Activated T-helper 1 cell treated with anti-CD3 and anti-CD28 coated beads, Interleukin-12 subunit alpha, Interleukin-12 subunit beta, Interleukin-2, Interleukin-4 antibody, amounts not matched to agents 30 ng/mL and 10 ng/mL and 1 ng/mL, durations not matched to agents 14 hours and 24 hours and 36 hours (primary cell): ENCODE measurements at regions of chr12 and their contacts with region 1.

Region 1: DNA sequence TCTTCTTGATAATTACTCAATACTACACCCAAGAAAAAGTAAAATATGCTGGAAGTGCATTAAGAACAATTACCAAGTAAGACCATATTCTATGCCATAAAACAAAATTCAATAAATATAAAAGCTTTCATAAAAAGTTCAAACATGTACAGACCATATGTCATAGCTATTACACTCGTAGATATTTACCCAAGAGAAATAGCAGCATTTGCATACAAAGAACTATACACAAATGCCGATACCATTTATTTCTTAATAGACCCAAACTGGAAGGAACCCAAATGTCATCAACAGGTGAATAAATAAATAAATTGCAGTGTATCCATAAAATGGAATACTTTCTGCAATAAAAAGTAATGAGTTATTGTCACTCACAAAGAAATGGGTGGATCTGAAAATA is 78.3 kb upstream of the SLC16A7 start:
- DNase-seq: no peak
- H3K4me3 Mint-ChIP-seq: no peak overlapping the region
- H3K27ac Mint-ChIP-seq: no peak overlapping the region
- H3K4me1 Mint-ChIP-seq: no peaks in the 10 kb centered on the region
- H3K27me3 Mint-ChIP-seq: no peaks in the 10 kb centered on the region

Region 2: DNA sequence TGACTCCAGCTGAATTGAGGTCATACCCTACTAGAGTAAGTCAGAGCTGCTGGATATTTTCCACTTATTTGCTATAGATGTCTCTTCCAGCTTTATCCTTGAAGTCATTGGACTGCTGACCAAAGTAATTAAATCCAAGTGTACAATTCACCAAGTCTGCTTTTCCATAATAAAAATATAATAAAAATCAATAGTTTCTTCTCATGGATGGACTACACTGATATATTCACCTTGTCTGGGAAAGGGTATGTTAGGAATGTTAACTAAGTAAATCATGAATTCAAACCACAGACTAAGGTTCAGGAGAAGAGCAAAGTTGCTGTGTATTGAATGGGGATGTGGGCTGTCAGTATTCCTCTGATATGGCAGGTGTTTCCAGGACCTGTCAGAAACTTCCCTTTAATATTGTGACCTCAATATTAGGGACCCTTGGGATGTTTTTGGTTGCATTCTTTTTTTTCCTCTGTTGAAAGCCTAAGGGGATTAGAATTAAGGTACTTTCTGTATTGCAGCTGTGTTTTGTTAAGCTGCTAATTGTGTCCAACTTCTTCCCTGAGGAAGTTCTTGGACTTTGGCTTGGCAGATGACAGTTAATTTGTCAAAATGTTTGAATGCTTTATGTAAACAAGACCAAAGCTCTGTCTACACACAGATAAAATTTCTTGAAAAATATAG is 1292.2 kb before region 1 on chr12:
- intact Hi-C with region 1: loop called (anchors 10 kb)
- DNase-seq: no peak
- H3K4me3 Mint-ChIP-seq: no peak overlapping the region
- H3K27ac Mint-ChIP-seq: no peak overlapping the region
- H3K4me1 Mint-ChIP-seq: no peaks in the 10 kb centered on the region
- H3K27me3 Mint-ChIP-seq: no peaks in the 10 kb centered on the region

Region 3: DNA sequence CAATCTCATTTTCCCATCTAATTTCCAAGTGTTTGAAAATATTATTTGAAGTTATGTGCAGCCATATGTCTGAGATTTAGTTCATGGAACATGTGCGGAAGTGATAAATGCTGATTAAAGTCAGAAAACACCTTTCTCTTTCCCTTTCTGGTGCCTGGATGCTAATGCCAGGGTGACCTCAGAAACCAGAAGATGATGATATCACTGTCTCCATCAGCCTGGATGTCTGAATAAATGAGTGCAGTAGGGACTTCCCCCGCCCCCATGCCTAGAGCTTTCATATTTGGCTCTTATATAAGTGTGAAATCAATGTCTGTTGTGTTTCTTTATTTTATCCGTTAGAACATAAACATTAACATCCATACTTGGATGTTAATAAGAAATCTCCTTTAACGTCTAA is 335.3 kb before region 1 on chr12:
- intact Hi-C with region 1: no loop called
- DNase-seq: no peak
- H3K4me3 Mint-ChIP-seq: no peak overlapping the region
- H3K27ac Mint-ChIP-seq: no peak overlapping the region
- H3K4me1 Mint-ChIP-seq: no peaks in the 10 kb centered on the region
- H3K27me3 Mint-ChIP-seq: no peaks in the 10 kb centered on the region

Region 4: GRCh38 chr12:59459966-59460660 is 57.4 kb before region 1 on chr12:
- intact Hi-C with region 1: no loop called
- DNase-seq: no peak
- H3K4me3 Mint-ChIP-seq: no peak overlapping the region
- H3K27ac Mint-ChIP-seq: no peak overlapping the region
- H3K4me1 Mint-ChIP-seq: no peaks in the 10 kb centered on the region
- H3K27me3 Mint-ChIP-seq: no peaks in the 10 kb centered on the region